ENCODE measurements at regions of chr16 and their contacts with region 1.

Region 1: GRCh38 chr16:84511180-84511824 is 6.8 kb upstream of the MEAK7 start:
- DNase-seq: peak; percentile 80
- ATAC-seq: peak; percentile 26
- H3K4me3 Mint-ChIP-seq: peak overlapping the region; percentile 19
- H3K27ac Mint-ChIP-seq: peak overlapping the region; percentile 68
- H3K4me1 Mint-ChIP-seq: peaks cover 59% of the 10 kb centered on the region
- H3K27me3 Mint-ChIP-seq: no peaks in the 10 kb centered on the region
- CTCF ChIP-seq: peak; percentile 92

Region 2: GRCh38 chr16:84156342-84156784 is 354.9 kb before region 1 on chr16:
- CTCF ChIA-PET with region 1: no interaction called
- POLR2A ChIA-PET with region 1: no interaction called
- intact Hi-C with region 1: no loop called
- DNase-seq: no peak
- ATAC-seq: no peak
- H3K4me3 Mint-ChIP-seq: no peak overlapping the region
- H3K27ac Mint-ChIP-seq: no peak overlapping the region
- H3K4me1 Mint-ChIP-seq: no peaks in the 10 kb centered on the region
- H3K27me3 Mint-ChIP-seq: peaks cover 16% of the 10 kb centered on the region
- CTCF ChIP-seq: no peak

Region 3: DNA sequence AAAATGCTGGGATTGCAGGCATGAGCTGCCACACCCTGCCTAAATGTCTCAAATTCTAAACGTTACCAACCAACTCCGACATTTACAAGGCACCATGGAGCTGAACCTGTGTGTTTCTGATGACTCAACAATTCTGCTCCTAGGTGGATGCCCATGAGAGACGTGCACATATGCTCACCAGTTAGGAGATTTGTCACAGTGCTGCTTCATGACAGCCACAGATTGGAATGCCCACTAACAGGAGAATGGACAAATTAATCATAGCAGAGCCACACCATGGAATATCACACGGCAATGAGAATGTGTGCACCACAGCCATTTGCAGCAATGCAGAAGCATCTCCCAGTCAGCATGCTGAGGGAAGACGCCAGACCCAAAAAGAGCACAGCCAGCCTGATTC is 263.5 kb before region 1 on chr16:
- CTCF ChIA-PET with region 1: no interaction called
- POLR2A ChIA-PET with region 1: no interaction called
- intact Hi-C with region 1: no loop called
- DNase-seq: no peak
- ATAC-seq: no peak
- H3K4me3 Mint-ChIP-seq: no peak overlapping the region
- H3K27ac Mint-ChIP-seq: no peak overlapping the region
- H3K4me1 Mint-ChIP-seq: no peaks in the 10 kb centered on the region
- H3K27me3 Mint-ChIP-seq: peaks cover 23% of the 10 kb centered on the region
- CTCF ChIP-seq: no peak

Region 4: DNA sequence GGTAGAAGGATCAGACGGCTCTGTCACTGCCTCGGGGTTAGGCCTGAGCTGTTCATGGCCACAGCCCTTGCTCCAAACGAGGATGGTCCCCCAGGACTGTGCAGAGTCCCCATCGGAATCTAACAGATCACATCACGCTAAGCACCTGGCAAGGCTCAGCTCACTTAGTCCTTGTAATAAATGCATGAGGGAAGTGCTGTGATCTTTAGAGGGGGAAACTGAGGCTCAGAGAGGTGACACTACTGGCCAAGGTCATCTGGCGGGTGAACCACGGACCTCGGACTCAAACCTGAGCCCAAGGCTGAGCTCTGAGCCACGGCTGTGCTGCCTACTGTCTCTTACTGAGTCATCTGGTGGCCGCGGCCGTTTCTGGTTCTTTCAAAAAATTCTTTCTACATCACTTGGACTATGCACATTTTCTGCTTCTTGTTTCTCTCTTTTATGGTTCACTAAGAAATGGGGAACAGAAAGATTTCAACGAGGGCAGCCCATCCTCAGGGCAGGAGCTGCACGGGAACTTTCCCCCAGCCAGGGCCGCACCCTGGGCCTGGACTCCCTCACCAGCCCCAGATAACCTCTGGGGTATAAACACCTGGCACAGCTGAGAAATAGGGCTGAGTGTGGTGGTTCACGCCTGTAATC is 51.0 kb after region 1 on chr16:
- CTCF ChIA-PET with region 1: interaction called, 7 read pairs
- POLR2A ChIA-PET with region 1: interaction called, 12 read pairs
- intact Hi-C with region 1: loop called (anchors 2 kb)
- DNase-seq: peak; percentile 38
- ATAC-seq: peak; percentile 89
- H3K4me3 Mint-ChIP-seq: peak overlapping the region; percentile 32
- H3K27ac Mint-ChIP-seq: peak overlapping the region; percentile 87
- H3K4me1 Mint-ChIP-seq: peaks cover 36% of the 10 kb centered on the region
- H3K27me3 Mint-ChIP-seq: no peaks in the 10 kb centered on the region
- CTCF ChIP-seq: no peak

Region 5: DNA sequence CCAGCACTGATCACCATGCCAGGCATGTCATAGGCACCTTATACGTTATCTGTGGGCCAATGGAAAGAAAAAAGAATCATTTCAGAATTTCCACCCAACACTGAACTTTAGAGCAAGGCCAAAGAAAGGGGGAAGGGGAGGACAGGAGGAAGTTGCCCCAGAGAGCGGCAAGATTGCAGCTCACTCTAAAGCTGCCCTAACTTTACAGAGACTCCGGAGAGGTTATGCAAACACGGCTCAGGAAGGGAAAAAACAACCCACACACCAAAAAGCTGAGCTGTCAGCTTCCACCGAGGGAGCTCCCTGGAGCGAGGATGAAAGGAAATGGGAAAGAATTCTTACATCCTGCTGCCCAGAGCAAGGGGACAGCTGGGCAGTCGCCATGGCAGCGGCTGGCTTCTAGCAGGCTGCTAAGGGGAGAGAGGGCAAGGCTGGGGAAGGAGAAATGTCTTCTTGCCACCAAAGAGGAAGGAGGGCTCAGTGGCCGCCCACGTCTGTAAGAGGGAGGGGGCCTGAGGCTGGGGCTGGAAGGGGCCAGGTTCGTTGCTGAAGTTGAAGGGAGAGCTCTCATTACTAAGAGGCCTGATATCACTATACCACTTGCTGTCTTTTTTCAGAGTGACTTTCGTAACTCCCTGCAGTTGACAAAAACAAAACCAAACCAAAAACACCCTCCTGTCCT is 88.4 kb after region 1 on chr16:
- CTCF ChIA-PET with region 1: interaction called, 6 read pairs
- POLR2A ChIA-PET with region 1: interaction called, 82 read pairs
- intact Hi-C with region 1: no loop called
- DNase-seq: peak; percentile 55
- ATAC-seq: peak; percentile 40
- H3K4me3 Mint-ChIP-seq: peak overlapping the region; percentile 82
- H3K27ac Mint-ChIP-seq: peak overlapping the region; percentile 97
- H3K4me1 Mint-ChIP-seq: peaks cover 94% of the 10 kb centered on the region
- H3K27me3 Mint-ChIP-seq: no peaks in the 10 kb centered on the region
- CTCF ChIP-seq: no peak

Region 6: DNA sequence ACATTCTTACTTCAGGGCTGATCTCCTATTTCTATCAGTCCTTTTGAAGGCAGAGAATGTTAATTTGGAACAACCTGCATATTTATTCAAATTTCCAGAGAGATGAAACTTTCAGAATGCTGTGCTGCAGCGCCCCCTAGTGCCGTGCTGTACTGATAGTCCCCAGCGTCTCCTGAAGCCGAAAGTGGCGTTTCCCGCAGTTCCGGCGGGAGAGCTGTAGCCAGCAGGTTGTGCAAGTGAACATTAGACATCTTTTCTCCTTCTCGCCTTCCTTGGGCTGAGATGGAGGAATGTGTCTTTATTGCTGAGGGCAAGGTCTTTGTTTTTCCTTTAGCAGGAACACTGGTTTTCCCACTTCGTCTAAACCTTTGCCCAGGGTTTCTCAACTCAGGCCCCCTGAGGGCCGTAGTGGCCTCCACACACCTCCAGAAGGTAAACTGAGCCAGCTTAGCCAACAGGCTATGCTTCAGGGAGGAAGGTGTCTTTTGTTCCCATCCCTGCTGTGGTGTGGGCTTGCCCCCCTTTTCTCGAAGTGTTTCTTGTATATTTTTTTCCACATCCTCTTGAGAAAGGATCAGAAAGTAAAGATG is 214.9 kb after region 1 on chr16:
- CTCF ChIA-PET with region 1: interaction called, 20 read pairs
- POLR2A ChIA-PET with region 1: interaction called, 5 read pairs
- intact Hi-C with region 1: loop called (anchors 1 kb)
- DNase-seq: peak; percentile 73
- ATAC-seq: peak; percentile 51
- H3K4me3 Mint-ChIP-seq: peak overlapping the region; percentile 81
- H3K27ac Mint-ChIP-seq: peak overlapping the region; percentile 86
- H3K4me1 Mint-ChIP-seq: peaks cover 84% of the 10 kb centered on the region
- H3K27me3 Mint-ChIP-seq: no peaks in the 10 kb centered on the region
- CTCF ChIP-seq: peak; percentile 75